ENCODE measurements at regions of chr3 and their contacts with region 1.

Region 1: DNA sequence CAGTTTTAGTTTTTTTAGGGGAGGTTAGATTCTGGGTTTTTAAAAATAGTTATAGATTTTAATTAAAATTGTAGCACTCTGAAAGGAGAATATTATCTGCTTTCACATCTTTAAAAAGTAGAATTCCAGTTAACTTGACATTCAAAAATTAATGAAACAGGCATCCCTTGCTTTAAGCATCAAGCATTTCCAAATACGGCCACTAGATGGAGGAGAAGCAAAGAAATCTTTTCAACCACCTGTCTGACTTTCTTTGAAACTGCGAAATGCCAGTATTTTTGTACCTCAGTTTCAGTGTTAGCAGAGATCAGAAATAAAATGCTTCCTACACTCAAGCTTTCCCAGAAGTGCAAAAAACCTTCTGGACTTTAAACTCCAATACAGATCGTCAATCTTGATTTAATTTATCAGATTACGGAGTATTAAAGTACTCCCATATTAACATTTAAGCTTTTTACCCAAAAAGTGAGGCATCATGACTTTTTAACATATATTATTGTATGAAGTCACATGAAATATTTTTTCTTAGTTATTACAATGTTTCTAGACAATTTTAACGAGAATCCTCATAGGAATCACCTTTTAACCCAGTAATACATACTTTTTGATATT is 153.3 kb downstream of the P3H2 start:
- DNase-seq: peak; percentile 44
- ATAC-seq: peak; percentile 49; the same call in 1 of the 2 replicates
- H3K4me3 ChIP-seq: no peak overlapping the region
- H3K27ac ChIP-seq: no peak overlapping the region
- H3K4me1 ChIP-seq: no peaks in the 10 kb centered on the region
- H3K27me3 ChIP-seq: no peaks in the 10 kb centered on the region
- CTCF ChIP-seq: peak; percentile 63 to 86 (median 81)
- POLR2A ChIP-seq: no peak
- RAD21 ChIP-seq: peak; percentile 88

Region 2: GRCh38 chr3:190205739-190206138 is 238.4 kb after region 1 on chr3:
- CTCF ChIA-PET with region 1: interaction called, 10 read pairs
- POLR2A ChIA-PET with region 1: no interaction called
- RAD21 ChIA-PET with region 1: no interaction called
- intact Hi-C with region 1: loop called (anchors 1 kb)
- DNase-seq: no peak
- ATAC-seq: no peak
- H3K4me3 ChIP-seq: no peak overlapping the region
- H3K27ac ChIP-seq: no peak overlapping the region
- H3K4me1 ChIP-seq: peaks cover 0 to 4% of the 10 kb centered on the region in 2 experiments; a peak in 2 of 4 replicates
- H3K27me3 ChIP-seq: no peaks in the 10 kb centered on the region
- CTCF ChIP-seq: no peak
- POLR2A ChIP-seq: no peak
- RAD21 ChIP-seq: no peak

Region 3: DNA sequence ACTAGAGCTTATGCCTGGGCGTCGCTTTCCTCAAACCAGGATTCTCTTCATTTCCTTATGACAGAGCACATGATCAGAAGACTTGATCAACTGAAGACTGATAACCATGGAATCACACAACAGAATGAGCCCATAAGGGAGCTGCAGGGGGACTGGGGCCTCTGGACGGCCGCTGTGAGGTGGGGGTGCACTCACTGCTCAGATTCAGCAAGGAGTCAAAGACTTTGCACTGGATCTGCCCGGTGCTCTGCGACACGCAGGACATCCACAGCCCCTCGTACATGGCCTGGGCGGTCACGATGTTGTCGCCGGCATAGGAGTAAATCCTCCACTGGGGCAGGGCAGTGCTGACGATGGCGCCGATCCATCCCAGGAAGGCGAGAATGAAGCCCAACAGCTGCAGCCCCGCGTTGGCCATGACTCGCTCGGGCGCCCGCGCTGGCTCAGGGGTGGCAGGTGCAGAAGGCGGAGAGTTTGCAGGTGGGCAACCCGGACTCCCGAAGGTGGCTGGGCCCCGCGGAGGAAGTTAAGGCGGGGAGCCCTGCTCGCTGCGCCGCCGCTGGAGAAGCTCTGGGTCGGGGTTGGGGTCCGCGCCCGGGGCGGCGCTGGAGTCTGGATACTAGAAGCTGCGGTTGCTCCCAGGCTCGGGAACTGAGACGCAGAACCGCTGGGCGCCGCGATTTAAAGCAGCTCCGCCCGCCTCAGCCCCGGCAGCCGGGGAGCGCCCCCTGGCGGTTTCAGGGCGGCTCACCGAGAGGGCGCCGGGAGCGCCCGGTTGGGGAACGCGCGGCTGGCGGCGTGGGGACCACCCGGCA is 354.6 kb after region 1 on chr3 and contains the start of gene CLDN1:
- CTCF ChIA-PET with region 1: interaction called, 21 read pairs
- POLR2A ChIA-PET with region 1: no interaction called
- RAD21 ChIA-PET with region 1: no interaction called
- intact Hi-C with region 1: loop called (anchors 1 kb)
- DNase-seq: peak; percentile 24
- ATAC-seq: peak; percentile 97
- H3K4me3 ChIP-seq: peak within 1 kb of the TSS; percentile 25 to 34
- H3K27ac ChIP-seq: no peak within 1 kb of the TSS
- H3K4me1 ChIP-seq: peaks cover 0 to 10% of the 10 kb centered on the region in 2 experiments; a peak in 1 of 4 replicates
- H3K27me3 ChIP-seq: no peaks in the 10 kb centered on the region; the same call in 1 of the 2 replicates
- CTCF ChIP-seq: peak; percentile 79 to 92 (median 84)
- POLR2A ChIP-seq: no peak
- RAD21 ChIP-seq: peak; percentile 85
- total RNA-seq, gene CLDN1: 0.20 TPM

Region 4: DNA sequence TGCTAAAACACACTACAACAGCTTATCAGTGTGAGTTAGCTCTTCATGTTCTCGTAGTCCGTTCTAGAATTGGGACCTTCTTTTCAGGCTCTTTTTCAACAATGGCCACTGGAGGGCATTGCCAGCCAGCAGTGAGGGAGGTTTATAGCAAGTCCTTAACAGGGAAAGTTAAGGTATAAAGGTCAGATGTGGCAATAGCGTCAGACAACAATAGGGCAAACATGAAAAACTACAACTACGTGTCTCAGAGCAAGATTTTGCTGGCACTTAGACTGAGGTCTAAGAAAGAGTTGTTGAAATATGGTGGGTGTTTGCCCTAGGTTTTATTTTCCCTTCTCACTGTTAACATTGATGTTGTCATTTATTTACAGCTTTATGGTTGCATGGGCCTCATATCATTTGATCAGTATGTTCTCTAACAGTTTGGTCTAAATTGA is 733.8 kb after region 1 on chr3:
- CTCF ChIA-PET with region 1: interaction called, 8 read pairs
- POLR2A ChIA-PET with region 1: interaction called, 4 read pairs
- RAD21 ChIA-PET with region 1: no interaction called
- intact Hi-C with region 1: loop called (anchors 2 kb)
- DNase-seq: peak; percentile 51
- ATAC-seq: peak; percentile 94
- H3K4me3 ChIP-seq: no peak overlapping the region
- H3K27ac ChIP-seq: no peak overlapping the region
- H3K4me1 ChIP-seq: peaks cover 0 to 3% of the 10 kb centered on the region in 2 experiments; a peak in 1 of 4 replicates
- H3K27me3 ChIP-seq: no peaks in the 10 kb centered on the region
- CTCF ChIP-seq: peak; percentile 62 to 77 (median 68); a peak in 5 of 6 replicates
- POLR2A ChIP-seq: no peak
- RAD21 ChIP-seq: peak; percentile 85